Heart left ventricle (tissue), 16 donors: ENCODE measurements at regions of chr6 and their contacts with region 1.

Region 1: GRCh38 chr6:33147807-33148666 is 44.2 kb downstream of the COL11A2 start:
- DNase-seq: no peak
- ATAC-seq: peak in 1 of 4 donors; percentile 54
- H3K4me3 ChIP-seq: no peak overlapping the region
- H3K27ac ChIP-seq: no peak overlapping the region
- H3K4me1 ChIP-seq: peaks cover 0 to 7% (median 0%) of the 10 kb centered on the region in 12 donors
- H3K27me3 ChIP-seq: peaks cover 0 to 15% (median 4%) of the 10 kb centered on the region in 9 donors
- CTCF ChIP-seq: peak; percentile 58 to 93 (median 72)
- POLR2A ChIP-seq: no peak

Region 2: DNA sequence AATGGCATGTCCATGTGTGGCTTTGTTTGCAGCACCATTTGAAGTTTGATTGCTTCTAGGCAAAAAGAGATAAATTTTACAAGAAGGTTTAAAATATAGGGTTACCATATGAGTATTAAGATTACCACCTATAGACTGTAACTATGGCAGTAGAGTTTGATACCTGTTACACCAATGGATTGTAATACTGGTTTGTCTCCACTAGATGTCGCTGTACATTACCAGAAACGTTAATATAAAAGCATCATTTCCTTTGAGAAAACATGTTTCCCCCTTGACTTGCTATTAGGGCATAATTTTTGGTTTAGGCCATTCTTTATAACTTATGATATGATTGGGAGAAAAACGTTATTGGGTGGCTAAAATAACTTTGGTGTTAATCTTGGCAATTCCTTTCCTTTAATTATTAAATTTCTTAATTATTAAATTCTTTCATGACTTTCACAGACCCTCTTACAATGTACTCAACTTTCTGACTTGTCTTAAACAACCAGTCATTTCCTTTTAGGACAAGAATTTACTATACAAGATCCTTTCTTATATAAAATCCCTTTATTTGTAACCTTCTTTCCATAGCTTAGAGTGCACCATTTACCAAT is 29.4 kb before region 1 on chr6:
- intact Hi-C with region 1: loop called in 1 of 10 experiments (anchors 2 kb)
- DNase-seq: no peak
- ATAC-seq: no peak
- H3K4me3 ChIP-seq: no peak overlapping the region
- H3K27ac ChIP-seq: no peak overlapping the region
- H3K4me1 ChIP-seq: peaks cover 0 to 24% (median 0%) of the 10 kb centered on the region in 12 donors
- H3K27me3 ChIP-seq: peaks cover 17 to 48% (median 25%) of the 10 kb centered on the region in 9 donors
- CTCF ChIP-seq: peak; percentile 77 to 96 (median 88)
- POLR2A ChIP-seq: no peak

Region 3: DNA sequence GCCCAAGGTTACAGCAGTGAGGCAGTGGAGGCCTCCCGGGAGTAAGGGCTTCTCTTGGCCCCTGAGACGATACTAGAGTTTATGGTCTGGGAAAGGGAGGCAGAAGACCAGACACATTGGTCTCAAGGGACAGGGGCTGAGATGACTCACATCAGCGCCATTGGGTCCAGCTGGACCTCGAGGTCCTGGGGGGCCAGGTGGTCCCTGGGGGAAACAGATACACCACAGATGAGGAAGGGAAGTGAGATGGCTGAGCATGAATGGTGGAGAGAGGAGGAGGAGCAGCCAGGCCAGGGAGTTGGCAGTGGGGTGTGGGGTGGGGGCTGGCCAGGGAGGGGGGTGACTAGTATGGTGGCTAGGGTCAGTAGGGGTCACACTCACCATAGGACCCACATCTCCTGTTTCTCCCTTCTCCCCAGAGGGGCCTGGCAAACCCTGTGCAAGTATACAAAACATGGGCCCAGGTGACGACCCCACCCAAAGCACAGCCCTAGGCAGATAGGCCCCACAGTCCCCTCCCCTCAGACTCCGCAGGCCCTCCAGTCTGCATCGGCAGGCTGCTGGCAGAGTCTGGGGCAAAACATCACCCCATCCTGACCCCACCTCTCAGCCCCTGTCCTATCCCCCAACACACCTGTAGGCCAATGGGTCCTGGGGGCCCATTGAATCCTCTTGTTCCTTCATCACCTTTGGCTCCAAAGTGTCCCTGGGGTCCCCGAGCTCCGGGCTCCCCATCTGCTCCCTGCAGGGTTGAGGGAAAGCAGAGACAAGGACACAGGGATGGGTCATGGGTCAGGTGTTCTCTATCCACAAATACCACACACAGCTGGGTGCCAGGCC is 22.4 kb after region 1 on chr6:
- intact Hi-C with region 1: loop called in 1 of 10 experiments (anchors 1 kb)
- DNase-seq: no peak
- ATAC-seq: no peak
- H3K4me3 ChIP-seq: no peak overlapping the region
- H3K27ac ChIP-seq: no peak overlapping the region
- H3K4me1 ChIP-seq: no peaks in the 10 kb centered on the region
- H3K27me3 ChIP-seq: no peaks in the 10 kb centered on the region
- CTCF ChIP-seq: no peak
- POLR2A ChIP-seq: no peak